ENCODE measurements at regions of chr3 and their contacts with region 1.

Region 1: GRCh38 chr3:182713743-182714517 is 79.4 kb upstream of the ATP11B start:
- DNase-seq: no peak
- H3K4me3 Mint-ChIP-seq: no peak overlapping the region
- H3K27ac Mint-ChIP-seq: no peak overlapping the region
- H3K4me1 Mint-ChIP-seq: peaks cover 8% of the 10 kb centered on the region
- H3K27me3 Mint-ChIP-seq: no peaks in the 10 kb centered on the region

Region 2: DNA sequence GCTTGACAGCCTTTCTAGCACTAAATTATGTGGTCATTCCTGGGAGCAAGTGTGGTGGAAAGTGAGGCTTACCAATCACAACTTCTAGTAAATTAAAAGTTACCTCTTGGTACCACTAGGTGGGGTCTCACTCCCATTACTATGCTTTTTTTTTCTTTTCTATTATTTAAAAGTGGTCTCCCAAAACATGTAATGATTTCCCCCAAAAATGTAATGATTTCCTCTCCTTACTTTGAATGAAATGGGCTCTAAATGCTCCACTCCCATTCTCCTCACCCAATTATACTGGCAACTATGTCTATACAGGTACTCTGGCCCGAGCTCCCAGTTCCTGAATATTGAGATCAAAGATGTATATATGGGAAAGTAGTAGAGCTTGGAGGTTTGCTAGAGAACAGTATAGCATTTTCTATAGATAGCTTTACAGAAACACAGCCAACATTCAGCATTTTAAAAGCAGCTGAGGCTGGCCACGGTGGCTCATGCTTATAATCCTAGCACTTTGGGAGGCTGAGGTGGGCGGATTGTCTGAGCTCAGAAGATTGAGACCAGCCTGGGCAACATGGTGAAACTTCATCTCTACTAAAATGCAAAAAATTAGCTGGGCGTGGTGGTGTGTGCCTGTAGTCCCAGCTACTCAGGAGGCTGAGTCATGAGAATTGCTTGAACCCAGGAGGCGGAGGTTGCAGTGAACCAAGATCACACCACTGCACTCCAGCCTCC is 195.5 kb after region 1 on chr3:
- CTCF ChIA-PET with region 1: interaction called, 4 read pairs
- intact Hi-C with region 1: loop called (anchors 2 kb)
- DNase-seq: no peak
- H3K4me3 Mint-ChIP-seq: no peak overlapping the region
- H3K27ac Mint-ChIP-seq: peak overlapping the region; percentile 54
- H3K4me1 Mint-ChIP-seq: peaks cover 45% of the 10 kb centered on the region
- H3K27me3 Mint-ChIP-seq: no peaks in the 10 kb centered on the region

Region 3: DNA sequence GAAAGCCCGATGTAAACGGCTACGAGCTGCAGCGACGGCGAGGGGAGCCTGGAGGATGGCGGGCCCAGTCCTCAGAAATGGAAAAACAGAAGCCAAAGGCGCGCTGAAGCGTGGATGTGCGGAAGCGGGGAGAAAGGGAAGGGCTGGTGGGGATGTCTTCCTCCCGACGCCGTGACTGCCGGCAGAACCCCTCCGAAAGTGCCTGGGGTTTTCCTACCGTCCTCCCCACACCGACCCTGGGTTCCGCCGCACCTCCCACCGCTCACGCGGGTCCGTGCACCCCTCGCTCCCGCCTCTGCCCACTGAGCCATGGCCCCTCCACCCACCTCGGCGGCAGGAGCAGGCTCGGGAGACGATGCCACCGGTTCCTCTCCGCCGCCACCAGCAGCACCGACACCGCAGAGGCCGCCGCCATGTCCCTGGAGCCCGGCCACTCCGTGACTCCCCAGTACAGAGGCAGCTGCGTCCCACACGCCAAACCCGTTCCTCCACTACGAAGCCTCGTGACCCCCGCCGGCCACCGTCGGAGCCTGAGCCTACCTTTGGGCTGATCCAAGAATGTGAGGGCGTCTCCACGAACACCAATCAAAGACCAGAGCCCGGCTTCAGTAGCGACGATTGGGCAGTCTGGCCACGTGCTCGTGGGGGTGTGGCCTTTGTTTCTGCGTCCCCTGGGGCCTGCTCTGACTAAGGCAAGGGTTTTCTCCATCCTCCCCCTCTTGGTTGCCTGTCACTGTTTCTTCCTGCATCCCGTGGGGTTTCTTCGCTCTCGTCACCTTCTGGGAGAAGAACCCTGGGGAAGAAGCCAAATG is 385.3 kb after region 1 on chr3 and contains the start of gene MCCC1:
- CTCF ChIA-PET with region 1: interaction called, 4 read pairs
- intact Hi-C with region 1: loop called (anchors 1 kb)
- DNase-seq: peak; percentile 99
- H3K4me3 Mint-ChIP-seq: peak within 1 kb of the TSS; percentile 97
- H3K27ac Mint-ChIP-seq: peak within 1 kb of the TSS; percentile 91
- H3K4me1 Mint-ChIP-seq: peaks cover 33% of the 10 kb centered on the region
- H3K27me3 Mint-ChIP-seq: no peaks in the 10 kb centered on the region
- total RNA-seq, gene MCCC1: 21.0 to 24.9 TPM

Region 4: DNA sequence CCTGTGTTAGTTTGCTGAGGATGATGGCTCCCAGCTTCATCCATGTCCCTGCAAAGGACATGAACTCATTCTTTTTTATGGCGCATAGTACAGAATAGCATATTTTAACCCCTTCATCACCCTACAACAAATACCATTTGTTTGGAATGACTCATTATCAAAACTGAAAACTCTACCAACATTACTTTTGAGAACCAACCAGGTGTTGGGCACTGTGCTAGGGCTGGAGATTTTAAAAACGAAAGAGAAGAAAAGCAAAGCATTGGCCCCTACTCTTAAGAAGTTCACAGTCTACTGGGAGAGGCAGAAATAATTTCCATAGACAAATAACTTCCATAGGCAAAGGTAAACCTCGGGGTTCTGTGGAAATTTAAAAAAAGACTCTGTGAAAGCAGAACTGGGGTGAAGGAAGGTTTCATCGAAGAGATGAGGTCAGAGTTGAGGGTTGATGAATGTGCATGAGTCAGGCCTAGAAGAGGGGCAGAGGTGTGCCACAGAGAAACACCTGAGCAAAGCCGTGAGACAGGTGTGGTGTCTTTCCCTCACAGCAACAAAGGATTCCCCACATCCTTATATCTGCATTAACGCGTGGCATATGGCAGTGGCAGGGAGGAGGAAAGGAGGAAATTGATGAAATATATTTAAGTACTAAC is 663.5 kb after region 1 on chr3:
- CTCF ChIA-PET with region 1: no interaction called
- intact Hi-C with region 1: loop called (anchors 1 kb)
- DNase-seq: no peak
- H3K4me3 Mint-ChIP-seq: no peak overlapping the region
- H3K27ac Mint-ChIP-seq: no peak overlapping the region
- H3K4me1 Mint-ChIP-seq: peaks cover 21% of the 10 kb centered on the region
- H3K27me3 Mint-ChIP-seq: no peaks in the 10 kb centered on the region